ENCODE measurements at regions of chr6 and their contacts with region 1.

Region 1: GRCh38 chr6:137849181-137849980 is 17.7 kb upstream of the TNFAIP3 start:
- DNase-seq: peak; percentile 70
- ATAC-seq: peak; percentile 91
- H3K4me3 Mint-ChIP-seq: no peak overlapping the region
- H3K27ac Mint-ChIP-seq: peak overlapping the region; percentile 17
- H3K4me1 Mint-ChIP-seq: peaks cover 41% of the 10 kb centered on the region
- H3K27me3 Mint-ChIP-seq: no peaks in the 10 kb centered on the region

Region 2: GRCh38 chr6:137680705-137681346 is 168.6 kb before region 1 on chr6:
- CTCF ChIA-PET with region 1: no interaction called
- POLR2A ChIA-PET with region 1: no interaction called
- intact Hi-C with region 1: loop called in 1 of 2 experiments (anchors 1 kb)
- DNase-seq: no peak
- ATAC-seq: peak; percentile 62
- H3K4me3 Mint-ChIP-seq: peak overlapping the region; percentile 2
- H3K27ac Mint-ChIP-seq: peak overlapping the region; percentile 67
- H3K4me1 Mint-ChIP-seq: peaks cover 53% of the 10 kb centered on the region
- H3K27me3 Mint-ChIP-seq: peaks cover 12% of the 10 kb centered on the region

Region 3: DNA sequence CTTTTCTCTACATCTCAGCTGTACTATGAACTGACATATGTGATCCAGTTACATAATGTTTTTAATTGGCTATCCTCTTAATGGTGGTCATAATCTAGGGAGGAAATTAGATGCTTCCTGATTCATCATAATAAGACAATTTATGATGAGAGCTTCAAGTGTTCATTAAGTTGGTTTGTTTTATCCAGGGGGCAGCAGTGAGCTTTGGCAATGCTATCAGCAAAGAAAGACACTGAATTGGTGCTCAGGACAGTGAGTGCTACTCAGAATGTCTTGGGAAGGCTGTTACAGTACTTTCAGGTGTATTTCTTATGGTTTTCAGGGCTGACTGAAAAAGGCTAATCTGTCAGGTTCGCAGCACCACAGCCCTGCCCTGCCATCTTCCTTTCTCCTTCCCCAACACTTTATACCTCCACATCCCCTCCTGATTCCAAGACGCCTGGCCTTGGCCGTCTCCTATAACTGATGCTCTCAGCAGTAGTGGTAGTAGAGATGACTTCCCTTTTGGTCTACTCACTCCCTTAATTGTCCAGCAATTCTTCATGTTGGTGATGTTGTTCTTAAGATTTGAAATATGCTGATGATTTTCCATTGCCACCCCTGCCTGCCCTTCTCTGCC is 49.3 kb before region 1 on chr6:
- CTCF ChIA-PET with region 1: interaction called, 5 read pairs
- POLR2A ChIA-PET with region 1: no interaction called
- intact Hi-C with region 1: loop called in 1 of 2 experiments (anchors 2 kb)
- DNase-seq: peak; percentile 76
- ATAC-seq: peak; percentile 80
- H3K4me3 Mint-ChIP-seq: no peak overlapping the region
- H3K27ac Mint-ChIP-seq: peak overlapping the region; percentile 84
- H3K4me1 Mint-ChIP-seq: peaks cover 65% of the 10 kb centered on the region
- H3K27me3 Mint-ChIP-seq: no peaks in the 10 kb centered on the region

Region 4: DNA sequence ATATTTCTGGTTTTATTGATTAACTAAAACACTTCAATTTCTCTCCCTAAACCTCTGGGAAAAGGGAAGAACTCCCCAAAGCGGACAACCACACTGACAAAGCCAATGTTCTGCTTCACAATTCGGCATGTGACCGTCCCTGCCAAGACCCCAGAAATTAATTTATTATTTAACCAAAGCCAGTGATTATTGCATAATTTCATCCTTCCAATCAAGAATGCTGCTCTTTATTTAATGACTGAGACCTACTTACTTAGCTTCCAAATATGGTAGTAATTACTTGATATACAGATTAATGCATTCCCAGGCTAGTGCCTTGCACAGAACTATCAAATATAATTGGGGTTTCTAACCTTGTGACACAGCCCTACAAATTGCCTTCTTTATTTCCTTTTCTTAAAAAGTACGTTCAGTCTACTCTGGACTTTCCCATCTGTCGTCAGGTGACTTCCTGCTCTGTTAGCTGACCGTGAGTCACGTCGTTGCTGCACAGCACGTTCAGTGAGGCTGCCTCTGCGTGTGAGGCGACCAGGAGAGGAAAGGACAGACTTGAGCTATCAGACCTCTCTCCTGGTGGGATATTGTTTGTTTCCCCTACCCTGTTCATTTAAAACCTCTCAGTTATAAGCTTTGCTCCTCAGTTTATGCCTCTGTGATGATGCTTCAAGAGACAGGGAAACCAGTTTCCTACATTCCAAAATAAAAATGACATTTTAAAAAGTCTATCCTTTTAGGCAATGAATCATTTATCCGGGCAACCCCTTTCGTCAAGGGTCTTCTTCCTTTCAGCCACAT is 38.1 kb before region 1 on chr6:
- CTCF ChIA-PET with region 1: interaction called, 3 read pairs
- POLR2A ChIA-PET with region 1: no interaction called
- intact Hi-C with region 1: loop called (anchors 1 to 5 kb)
- DNase-seq: peak; percentile 91
- ATAC-seq: peak; percentile 93
- H3K4me3 Mint-ChIP-seq: peak overlapping the region; percentile 55
- H3K27ac Mint-ChIP-seq: peak overlapping the region; percentile 83
- H3K4me1 Mint-ChIP-seq: peaks cover 79% of the 10 kb centered on the region
- H3K27me3 Mint-ChIP-seq: no peaks in the 10 kb centered on the region

Region 5: GRCh38 chr6:137832110-137832509 is 17.3 kb before region 1 on chr6:
- CTCF ChIA-PET with region 1: interaction called, 5 read pairs
- POLR2A ChIA-PET with region 1: interaction called, 3 read pairs
- intact Hi-C with region 1: loop called (anchors 1 kb)
- DNase-seq: no peak
- ATAC-seq: no peak
- H3K4me3 Mint-ChIP-seq: no peak overlapping the region
- H3K27ac Mint-ChIP-seq: peak overlapping the region; percentile 32
- H3K4me1 Mint-ChIP-seq: peaks cover 58% of the 10 kb centered on the region
- H3K27me3 Mint-ChIP-seq: no peaks in the 10 kb centered on the region

Region 6: GRCh38 chr6:137878486-137879285 is 29.3 kb after region 1 on chr6:
- CTCF ChIA-PET with region 1: no interaction called
- POLR2A ChIA-PET with region 1: no interaction called
- intact Hi-C with region 1: no loop called
- DNase-seq: no peak
- ATAC-seq: no peak
- H3K4me3 Mint-ChIP-seq: peak overlapping the region; percentile 60
- H3K27ac Mint-ChIP-seq: peak overlapping the region; percentile 99
- H3K4me1 Mint-ChIP-seq: peaks cover 86% of the 10 kb centered on the region
- H3K27me3 Mint-ChIP-seq: no peaks in the 10 kb centered on the region

Region 7: GRCh38 chr6:137903933-137904821 is 54.8 kb after region 1 on chr6:
- CTCF ChIA-PET with region 1: no interaction called
- POLR2A ChIA-PET with region 1: no interaction called
- intact Hi-C with region 1: loop called in 1 of 2 experiments (anchors 1 kb)
- DNase-seq: peak; percentile 75
- ATAC-seq: peak; percentile 85
- H3K4me3 Mint-ChIP-seq: peak overlapping the region; percentile 69
- H3K27ac Mint-ChIP-seq: peak overlapping the region; percentile 98
- H3K4me1 Mint-ChIP-seq: peaks cover 62% of the 10 kb centered on the region
- H3K27me3 Mint-ChIP-seq: no peaks in the 10 kb centered on the region

Region 8: DNA sequence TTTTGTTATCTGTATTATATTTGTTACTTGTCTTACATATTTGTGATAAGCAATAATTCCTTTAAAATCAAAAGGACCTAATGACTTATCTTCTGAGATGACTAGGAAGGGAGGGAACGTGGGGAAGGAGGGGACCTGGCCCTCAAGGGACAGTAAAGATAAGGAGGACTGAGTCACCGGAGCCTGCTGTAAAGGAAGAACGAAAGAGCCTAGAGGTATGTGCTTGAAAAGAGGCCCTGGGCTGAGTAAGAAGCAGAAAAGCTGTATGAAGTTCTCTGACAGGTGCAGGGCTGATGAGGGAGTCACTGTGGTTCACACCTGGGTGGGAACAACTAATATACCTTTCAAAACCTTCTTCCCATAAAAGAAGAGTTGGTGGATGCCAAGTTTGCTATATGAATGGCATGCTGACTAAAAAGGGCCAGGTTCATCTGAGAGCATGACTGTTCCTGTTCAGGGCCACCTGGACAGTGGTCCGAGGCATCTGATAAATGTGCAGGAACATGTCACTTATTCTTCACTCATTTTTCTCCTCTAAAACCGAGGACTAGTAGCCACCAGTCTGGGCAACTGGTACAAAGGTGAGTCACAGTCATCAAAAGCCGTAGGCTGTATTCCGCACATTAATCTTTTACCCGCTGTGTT is 129.0 kb after region 1 on chr6:
- CTCF ChIA-PET with region 1: no interaction called
- POLR2A ChIA-PET with region 1: no interaction called
- intact Hi-C with region 1: no loop called
- DNase-seq: peak; percentile 62
- ATAC-seq: peak; percentile 87
- H3K4me3 Mint-ChIP-seq: no peak overlapping the region
- H3K27ac Mint-ChIP-seq: peak overlapping the region; percentile 17
- H3K4me1 Mint-ChIP-seq: peaks cover 54% of the 10 kb centered on the region
- H3K27me3 Mint-ChIP-seq: no peaks in the 10 kb centered on the region

Measured in activated CD4-positive, alpha-beta T cell treated with anti-CD3 and anti-CD28 coated beads for 36 hours (primary cell).